ENCODE measurements at regions of chr12 and their contacts with region 1.

Region 1: DNA sequence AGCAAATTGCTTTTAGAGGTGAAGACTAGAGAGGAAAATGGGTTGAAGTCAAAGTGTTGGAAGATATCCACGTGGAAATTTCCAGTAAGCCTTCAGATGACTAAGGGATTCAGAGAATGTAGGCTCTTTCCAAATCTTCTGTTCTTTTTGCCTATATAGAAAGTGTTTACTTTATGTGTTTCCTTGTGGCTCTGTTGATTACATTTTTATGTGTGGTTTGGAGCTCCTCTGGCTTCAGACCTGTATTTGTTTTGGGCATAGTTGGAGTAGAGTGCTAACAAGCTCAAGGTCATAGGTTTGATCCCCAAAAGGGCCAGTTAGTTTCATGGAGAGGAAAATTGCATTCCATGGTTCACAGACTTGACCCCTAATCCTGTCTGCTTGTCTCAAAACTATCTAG is 91.9 kb downstream of the IGF1 start:
- DNase-seq: peak; percentile 66
- ATAC-seq: peak; percentile 91
- H3K4me3 ChIP-seq: no peak overlapping the region
- H3K27ac ChIP-seq: peak overlapping the region; percentile 54; the same call in 1 of the 2 replicates
- H3K4me1 ChIP-seq: peaks cover 4% of the 10 kb centered on the region
- H3K27me3 ChIP-seq: no peaks in the 10 kb centered on the region
- CTCF ChIP-seq: no peak
- POLR2A ChIP-seq: no peak
- RAD21 ChIP-seq: no peak

Region 2: DNA sequence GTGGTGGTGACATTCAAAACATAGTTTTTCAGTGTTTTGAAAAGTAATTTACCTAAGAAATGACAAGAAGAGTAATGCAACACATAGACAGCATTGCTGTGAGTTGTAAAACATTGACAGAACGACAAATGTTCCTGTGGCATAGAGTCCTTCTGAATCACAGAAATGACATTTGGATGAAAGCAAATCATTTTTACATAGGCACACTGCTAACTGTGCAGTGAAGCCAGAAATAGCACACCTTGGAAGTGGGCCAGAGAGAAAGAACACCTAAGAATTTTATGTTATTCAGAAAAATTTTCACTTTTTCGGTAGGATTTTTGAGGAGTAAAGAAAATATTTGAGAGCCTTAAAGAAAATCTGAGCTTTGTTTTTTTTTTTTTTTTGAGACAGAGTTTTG is 1493.3 kb before region 1 on chr12:
- CTCF ChIA-PET with region 1: no interaction called
- POLR2A ChIA-PET with region 1: no interaction called
- dilution Hi-C with region 1: no loop called
- in situ Hi-C with region 1: no loop called
- intact Hi-C with region 1: no loop called
- DNase-seq: no peak
- ATAC-seq: no peak
- H3K4me3 ChIP-seq: no peak overlapping the region
- H3K27ac ChIP-seq: no peak overlapping the region
- H3K4me1 ChIP-seq: peaks cover 2% of the 10 kb centered on the region; the same call in 1 of the 2 replicates
- H3K27me3 ChIP-seq: no peaks in the 10 kb centered on the region
- CTCF ChIP-seq: no peak
- POLR2A ChIP-seq: no peak
- RAD21 ChIP-seq: no peak

Region 3: DNA sequence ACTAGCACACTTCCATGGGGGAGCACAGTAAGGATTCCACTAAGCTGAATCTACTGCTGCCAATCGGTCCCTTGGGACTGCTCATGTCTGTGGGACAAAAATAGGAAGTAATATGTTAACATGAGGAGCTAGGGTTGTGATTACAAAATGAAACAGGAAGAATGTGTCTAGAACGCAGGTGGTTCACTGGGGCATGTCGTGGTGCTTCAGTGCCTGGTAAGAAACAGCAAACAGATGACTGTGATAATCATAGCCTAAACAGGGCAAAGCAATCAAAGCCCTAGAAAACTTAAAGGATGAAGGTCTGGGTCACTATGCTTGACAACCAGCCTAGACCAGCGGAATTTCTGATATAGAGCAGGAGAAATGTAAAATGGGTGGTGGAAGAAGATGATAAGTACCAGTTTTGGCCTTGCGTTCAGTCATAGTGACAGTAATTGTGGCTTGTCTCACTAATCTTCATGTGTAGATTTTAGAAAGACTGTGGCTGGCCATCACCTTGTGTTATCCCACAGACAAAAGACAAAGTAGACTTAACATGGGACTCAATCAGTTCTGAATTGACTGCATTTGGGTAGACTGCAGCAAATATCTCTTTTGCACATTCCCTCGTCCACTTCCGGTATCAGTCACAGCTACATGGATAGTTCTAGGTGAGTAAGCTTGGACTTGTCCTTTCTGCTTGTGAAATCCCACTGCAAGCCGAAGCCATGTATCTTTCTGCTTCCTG is 378.0 kb before region 1 on chr12:
- CTCF ChIA-PET with region 1: no interaction called
- POLR2A ChIA-PET with region 1: no interaction called
- dilution Hi-C with region 1: no loop called
- in situ Hi-C with region 1: no loop called
- intact Hi-C with region 1: no loop called
- DNase-seq: no peak
- ATAC-seq: no peak
- H3K4me3 ChIP-seq: no peak overlapping the region
- H3K27ac ChIP-seq: no peak overlapping the region
- H3K4me1 ChIP-seq: no peaks in the 10 kb centered on the region
- H3K27me3 ChIP-seq: no peaks in the 10 kb centered on the region
- CTCF ChIP-seq: no peak
- POLR2A ChIP-seq: no peak
- RAD21 ChIP-seq: no peak

Region 4: DNA sequence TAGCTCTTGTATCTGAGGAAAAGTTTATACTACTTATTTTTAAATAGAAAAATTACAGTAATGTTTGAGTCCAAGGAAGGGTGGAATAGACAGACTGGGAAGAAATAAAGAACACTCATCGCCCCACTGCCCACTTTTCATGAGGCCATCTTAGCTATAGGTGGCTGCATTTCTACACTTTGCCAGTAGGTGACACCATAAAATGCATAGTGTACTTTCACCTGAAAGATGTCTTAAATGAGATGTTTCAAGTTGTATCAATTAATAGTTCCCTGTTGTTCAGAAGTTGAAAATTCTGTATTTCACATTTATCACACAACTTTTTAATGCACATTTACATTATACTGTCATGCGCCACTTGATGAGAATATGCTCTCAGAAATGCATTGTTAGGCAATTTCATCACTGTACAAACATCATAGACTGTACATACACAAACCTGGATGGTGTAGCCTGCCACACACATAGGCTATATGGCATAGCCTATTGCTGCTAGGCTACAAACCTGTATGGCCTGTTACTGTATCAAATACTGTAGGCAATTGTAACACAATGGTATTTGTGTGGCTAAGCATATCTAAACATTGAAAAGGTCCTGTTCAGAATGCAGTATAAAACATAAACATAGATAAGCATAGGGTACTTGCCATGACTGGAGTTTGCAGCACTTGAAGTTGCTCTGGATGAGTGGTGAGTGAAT is 218.4 kb before region 1 on chr12:
- CTCF ChIA-PET with region 1: no interaction called
- POLR2A ChIA-PET with region 1: no interaction called
- dilution Hi-C with region 1: no loop called
- in situ Hi-C with region 1: no loop called
- intact Hi-C with region 1: loop called (anchors 5 kb)
- DNase-seq: peak; percentile 63
- ATAC-seq: peak; percentile 74
- H3K4me3 ChIP-seq: no peak overlapping the region
- H3K27ac ChIP-seq: no peak overlapping the region
- H3K4me1 ChIP-seq: peaks cover 7% of the 10 kb centered on the region
- H3K27me3 ChIP-seq: no peaks in the 10 kb centered on the region
- CTCF ChIP-seq: peak; percentile 57
- POLR2A ChIP-seq: no peak
- RAD21 ChIP-seq: peak; percentile 53

Region 5: DNA sequence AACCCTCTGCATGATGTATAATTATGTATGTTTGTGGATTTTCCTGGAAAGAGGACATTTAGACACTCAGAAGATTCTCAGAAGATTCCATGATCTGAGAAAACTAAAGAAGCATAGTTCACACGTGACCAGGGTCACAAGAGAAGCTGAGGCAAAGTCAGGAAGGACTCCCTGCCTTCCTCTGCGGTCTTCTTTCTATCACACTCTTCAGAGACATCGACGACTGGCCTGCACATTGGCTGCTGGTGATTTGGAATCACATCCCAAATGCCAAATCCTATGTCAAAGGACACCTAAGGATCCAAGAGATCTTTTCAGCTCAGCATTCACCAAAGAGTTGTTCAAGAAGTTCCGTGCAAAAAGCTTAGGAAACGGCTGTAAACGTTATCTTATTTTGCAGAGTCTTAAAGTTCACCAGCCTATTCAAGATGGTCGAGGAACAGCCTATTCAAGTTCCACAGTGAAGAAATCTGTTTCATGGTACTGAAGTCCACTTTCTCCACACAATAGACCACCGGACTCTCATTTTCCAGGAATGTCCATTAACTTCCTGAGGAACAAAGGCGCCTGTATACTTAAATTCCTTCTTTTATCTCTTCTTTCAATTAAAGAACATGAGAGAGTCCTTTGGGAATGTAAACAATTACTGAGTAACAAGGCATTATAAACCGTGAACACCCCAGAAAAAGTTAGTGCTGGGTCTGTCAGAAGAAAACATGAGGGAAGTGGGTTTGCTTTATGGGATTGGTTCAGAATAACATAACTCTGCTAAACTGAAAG is 49.8 kb after region 1 on chr12:
- CTCF ChIA-PET with region 1: no interaction called
- POLR2A ChIA-PET with region 1: no interaction called
- dilution Hi-C with region 1: no loop called
- in situ Hi-C with region 1: no loop called
- intact Hi-C with region 1: no loop called
- DNase-seq: peak; percentile 73
- ATAC-seq: peak; percentile 76
- H3K4me3 ChIP-seq: no peak overlapping the region
- H3K27ac ChIP-seq: peak overlapping the region; percentile 93
- H3K4me1 ChIP-seq: peaks cover 21% of the 10 kb centered on the region
- H3K27me3 ChIP-seq: no peaks in the 10 kb centered on the region
- CTCF ChIP-seq: no peak
- POLR2A ChIP-seq: no peak
- RAD21 ChIP-seq: no peak

Region 6: DNA sequence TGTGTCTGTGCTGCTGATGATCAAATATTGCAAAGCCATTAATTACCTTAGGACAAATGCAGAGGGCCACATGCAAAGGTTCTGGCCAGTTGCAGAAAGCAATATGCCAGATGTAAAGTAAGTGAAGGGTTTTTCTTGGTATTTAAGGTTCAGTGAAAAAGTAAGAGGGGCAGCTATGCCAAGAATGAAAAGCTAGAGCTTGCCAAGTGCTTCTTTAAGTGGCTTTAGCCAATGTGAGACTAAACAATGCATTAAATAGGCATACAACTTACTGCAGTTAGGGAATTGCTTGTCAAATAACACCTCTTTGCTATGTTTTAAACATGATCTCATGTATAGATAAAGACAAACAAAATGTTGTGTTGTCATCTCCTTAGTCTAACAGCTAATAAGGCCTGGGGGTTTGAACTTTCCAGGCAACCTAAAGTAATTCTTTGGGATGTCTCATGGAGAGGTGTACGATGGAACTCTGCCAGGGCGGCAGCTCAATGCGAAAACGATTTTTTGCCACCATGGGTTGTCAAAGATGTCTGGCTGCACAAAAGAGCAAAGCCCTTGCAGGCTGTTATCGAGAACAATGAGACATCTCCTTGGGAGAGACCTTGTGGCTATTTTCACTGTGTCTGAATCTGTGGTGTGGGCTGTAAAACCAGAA is 79.9 kb after region 1 on chr12:
- CTCF ChIA-PET with region 1: no interaction called
- POLR2A ChIA-PET with region 1: no interaction called
- dilution Hi-C with region 1: no loop called
- in situ Hi-C with region 1: no loop called
- intact Hi-C with region 1: loop called (anchors 2 kb)
- DNase-seq: peak; percentile 26
- ATAC-seq: peak; percentile 51
- H3K4me3 ChIP-seq: no peak overlapping the region
- H3K27ac ChIP-seq: peak overlapping the region; percentile 2; the same call in 1 of the 2 replicates
- H3K4me1 ChIP-seq: peaks cover 5% of the 10 kb centered on the region; the same call in 1 of the 2 replicates
- H3K27me3 ChIP-seq: no peaks in the 10 kb centered on the region
- CTCF ChIP-seq: no peak
- POLR2A ChIP-seq: no peak
- RAD21 ChIP-seq: no peak

Region 7: GRCh38 chr12:102652645-102653313 is 264.3 kb after region 1 on chr12:
- CTCF ChIA-PET with region 1: no interaction called
- POLR2A ChIA-PET with region 1: no interaction called
- dilution Hi-C with region 1: no loop called
- in situ Hi-C with region 1: no loop called
- intact Hi-C with region 1: no loop called
- DNase-seq: no peak
- ATAC-seq: no peak
- H3K4me3 ChIP-seq: no peak overlapping the region
- H3K27ac ChIP-seq: no peak overlapping the region
- H3K4me1 ChIP-seq: no peaks in the 10 kb centered on the region
- H3K27me3 ChIP-seq: no peaks in the 10 kb centered on the region; the same call in 1 of the 2 replicates
- CTCF ChIP-seq: no peak
- POLR2A ChIP-seq: no peak
- RAD21 ChIP-seq: no peak

Measured in IMR-90 (cell line).